ENCODE measurements at regions of chr5 and their contacts with region 1.

Region 1: GRCh38 chr5:69093771-69094482 is at the start of gene SLC30A5:
- DNase-seq: peak; percentile 100
- H3K4me3 ChIP-seq: peak within 1 kb of the TSS; percentile 84 to 97 (median 85)
- H3K27ac ChIP-seq: peak within 1 kb of the TSS; percentile 87
- H3K4me1 ChIP-seq: peaks cover 9% of the 10 kb centered on the region
- H3K27me3 ChIP-seq: no peaks in the 10 kb centered on the region
- CTCF ChIP-seq: peak; percentile 89 to 93
- POLR2A ChIP-seq: peak; percentile 96
- total RNA-seq, gene SLC30A5: 37.0 and 47.2 TPM in 2 replicates

Region 2: DNA sequence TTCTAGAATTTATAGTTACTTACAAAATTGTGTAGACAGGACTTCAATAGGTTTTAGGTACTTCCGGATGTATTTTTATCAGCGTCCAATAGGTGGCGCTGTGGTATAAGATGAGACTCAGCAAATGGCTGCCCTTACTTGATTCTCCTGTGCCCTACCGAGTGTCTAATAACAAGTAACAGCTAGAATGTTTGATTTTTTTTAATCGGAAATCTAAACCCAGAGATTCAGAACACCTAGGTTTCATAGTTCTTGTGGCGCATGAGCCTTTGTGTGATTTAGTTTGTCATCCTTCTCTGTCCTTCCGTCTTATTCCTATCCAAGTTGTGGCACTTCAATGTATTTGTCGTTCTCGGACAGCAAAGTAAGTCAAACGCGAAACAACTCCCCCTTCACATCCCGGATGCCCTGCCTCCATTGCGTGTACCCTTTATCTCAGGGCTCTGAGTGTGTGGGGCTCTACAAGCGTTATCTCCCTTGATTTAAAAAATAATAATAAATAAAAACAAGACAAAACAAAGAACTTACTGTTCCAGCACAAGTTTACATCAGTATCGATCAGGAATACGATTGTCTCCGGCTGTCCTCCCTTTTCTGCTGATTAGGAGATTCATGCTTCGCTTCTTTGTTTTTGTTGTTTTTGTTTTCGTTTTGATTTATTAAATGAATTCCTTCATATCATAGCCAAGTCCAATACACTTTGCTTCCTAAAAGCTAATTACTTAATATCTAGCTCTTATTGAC is 50.8 kb before region 1 on chr5:
- CTCF ChIA-PET with region 1: interaction called, 19 read pairs
- POLR2A ChIA-PET with region 1: interaction called, 6 read pairs
- dilution Hi-C with region 1: no loop called
- intact Hi-C with region 1: loop called (anchors 2 kb)
- DNase-seq: peak; percentile 94
- H3K4me3 ChIP-seq: peak overlapping the region; percentile 38 to 87 (median 82)
- H3K27ac ChIP-seq: peak overlapping the region; percentile 43
- H3K4me1 ChIP-seq: peaks cover 6% of the 10 kb centered on the region
- H3K27me3 ChIP-seq: peaks cover 5 to 6% of the 10 kb centered on the region in 2 experiments
- CTCF ChIP-seq: peak; percentile 60 to 63
- POLR2A ChIP-seq: no peak

Region 3: GRCh38 chr5:69189162-69190086 is 95.5 kb after region 1 on chr5 and contains the start of gene CENPH:
- CTCF ChIA-PET with region 1: interaction called, 12 read pairs
- POLR2A ChIA-PET with region 1: no interaction called
- dilution Hi-C with region 1: no loop called
- intact Hi-C with region 1: no loop called
- DNase-seq: peak; percentile 92
- H3K4me3 ChIP-seq: peak within 1 kb of the TSS; percentile 56 to 91 (median 80)
- H3K27ac ChIP-seq: peak within 1 kb of the TSS; percentile 73
- H3K4me1 ChIP-seq: peaks cover 12% of the 10 kb centered on the region
- H3K27me3 ChIP-seq: no peaks in the 10 kb centered on the region
- CTCF ChIP-seq: no peak
- POLR2A ChIP-seq: peak; percentile 78
- total RNA-seq, gene CENPH: 16.4 and 17.1 TPM in 2 replicates

Region 4: GRCh38 chr5:69369369-69370121 is 275.6 kb after region 1 on chr5 and contains the starts of genes AK6, RAD17 and TAF9:
- CTCF ChIA-PET with region 1: interaction called, 11 read pairs
- POLR2A ChIA-PET with region 1: no interaction called
- dilution Hi-C with region 1: no loop called
- intact Hi-C with region 1: loop called (anchors 1 kb)
- DNase-seq: peak; percentile 95
- H3K4me3 ChIP-seq: peak within 1 kb of the TSS; percentile 82 to 100 (median 98)
- H3K27ac ChIP-seq: peak within 1 kb of the TSS; percentile 97
- H3K4me1 ChIP-seq: peaks cover 15% of the 10 kb centered on the region
- H3K27me3 ChIP-seq: no peaks in the 10 kb centered on the region
- CTCF ChIP-seq: no peak
- POLR2A ChIP-seq: peak; percentile 95
- total RNA-seq, gene AK6: 30.1 and 37.0 TPM in 2 replicates
- total RNA-seq, gene RAD17: 18.4 and 21.9 TPM in 2 replicates
- total RNA-seq, gene TAF9: 67.6 and 67.8 TPM in 2 replicates

Measured in endothelial cell of umbilical vein (primary cell).